ENCODE measurements at regions of chr2 and their contacts with region 1.

Region 1: GRCh38 chr2:161283926-161284325 is 24.3 kb upstream of the PSMD14 start:
- DNase-seq: no peak
- H3K4me3 Mint-ChIP-seq: no peak overlapping the region
- H3K27ac Mint-ChIP-seq: no peak overlapping the region
- H3K4me1 Mint-ChIP-seq: no peaks in the 10 kb centered on the region
- H3K27me3 Mint-ChIP-seq: peaks cover 12% of the 10 kb centered on the region

Region 2: DNA sequence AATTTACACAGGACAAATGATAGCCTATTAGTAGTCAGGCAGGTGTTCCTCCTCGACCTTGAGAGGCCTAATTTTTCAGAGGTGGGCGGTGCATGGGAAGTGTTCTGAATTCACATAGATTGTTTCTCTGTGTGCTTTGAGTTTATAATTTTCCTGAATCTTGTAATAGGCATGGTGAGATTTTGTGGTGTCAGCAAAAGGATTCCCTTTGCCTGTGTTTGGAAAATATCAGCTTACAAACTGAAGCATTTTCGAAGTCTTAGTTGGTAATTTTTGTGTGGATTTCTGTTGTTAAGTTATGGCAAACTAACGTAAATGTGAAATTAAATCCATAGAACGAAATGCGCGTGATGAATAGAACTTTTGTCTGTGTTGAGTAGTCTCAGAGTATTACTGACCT is 596.3 kb before region 1 on chr2:
- CTCF ChIA-PET with region 1: no interaction called
- intact Hi-C with region 1: no loop called
- DNase-seq: no peak
- H3K4me3 Mint-ChIP-seq: no peak overlapping the region
- H3K27ac Mint-ChIP-seq: no peak overlapping the region
- H3K4me1 Mint-ChIP-seq: no peaks in the 10 kb centered on the region
- H3K27me3 Mint-ChIP-seq: no peaks in the 10 kb centered on the region

Region 3: DNA sequence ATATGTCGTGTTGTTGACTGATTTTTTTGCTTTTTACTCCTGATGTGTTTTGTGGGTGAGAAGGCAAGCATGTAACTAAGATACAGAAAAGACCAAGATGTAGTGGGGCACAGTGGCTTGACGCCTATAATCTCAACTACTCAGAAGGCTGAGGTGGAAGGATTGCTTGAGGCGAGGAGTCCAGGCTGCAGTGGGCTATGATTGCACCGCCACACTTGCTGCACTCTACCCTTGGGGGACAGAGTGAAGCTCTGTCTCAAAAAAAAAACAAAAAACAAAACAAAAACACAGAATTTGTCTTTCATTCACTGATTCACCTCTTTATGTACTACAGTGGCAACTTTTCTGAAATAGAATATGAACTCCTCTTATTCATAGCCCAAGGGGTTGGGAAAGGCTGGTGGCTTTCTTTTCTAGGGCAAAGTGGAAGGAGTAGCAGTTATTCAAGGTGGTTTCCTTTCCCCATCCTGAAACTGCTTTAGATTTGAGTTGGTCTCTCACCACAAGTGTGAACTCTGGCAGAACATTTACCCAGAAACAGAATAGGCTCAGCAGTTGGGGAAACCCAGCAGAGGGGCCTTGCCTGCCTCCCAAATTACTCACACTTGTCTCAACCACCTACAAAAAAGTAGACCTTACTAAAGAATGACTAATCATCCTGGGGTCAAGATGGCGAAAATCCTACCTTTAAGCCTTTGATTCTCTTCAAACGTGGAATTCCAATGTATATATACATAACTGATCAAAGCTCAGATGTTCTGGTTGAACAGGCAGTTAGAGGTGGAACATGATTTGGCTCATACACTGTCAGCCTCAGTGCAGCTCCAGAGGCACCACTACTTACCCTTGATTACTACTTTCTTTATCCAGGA is 117.2 kb before region 1 on chr2:
- CTCF ChIA-PET with region 1: no interaction called
- intact Hi-C with region 1: no loop called
- DNase-seq: peak; percentile 88
- H3K4me3 Mint-ChIP-seq: no peak overlapping the region
- H3K27ac Mint-ChIP-seq: peak overlapping the region; percentile 74
- H3K4me1 Mint-ChIP-seq: peaks cover 88% of the 10 kb centered on the region
- H3K27me3 Mint-ChIP-seq: no peaks in the 10 kb centered on the region

Region 4: GRCh38 chr2:161556440-161556839 is 272.5 kb after region 1 on chr2:
- CTCF ChIA-PET with region 1: no interaction called
- intact Hi-C with region 1: loop called (anchors 10 kb)
- DNase-seq: no peak
- H3K4me3 Mint-ChIP-seq: no peak overlapping the region
- H3K27ac Mint-ChIP-seq: no peak overlapping the region
- H3K4me1 Mint-ChIP-seq: no peaks in the 10 kb centered on the region
- H3K27me3 Mint-ChIP-seq: peaks cover 13% of the 10 kb centered on the region